ENCODE measurements at regions of chr9 and their contacts with region 1.

Region 1: DNA sequence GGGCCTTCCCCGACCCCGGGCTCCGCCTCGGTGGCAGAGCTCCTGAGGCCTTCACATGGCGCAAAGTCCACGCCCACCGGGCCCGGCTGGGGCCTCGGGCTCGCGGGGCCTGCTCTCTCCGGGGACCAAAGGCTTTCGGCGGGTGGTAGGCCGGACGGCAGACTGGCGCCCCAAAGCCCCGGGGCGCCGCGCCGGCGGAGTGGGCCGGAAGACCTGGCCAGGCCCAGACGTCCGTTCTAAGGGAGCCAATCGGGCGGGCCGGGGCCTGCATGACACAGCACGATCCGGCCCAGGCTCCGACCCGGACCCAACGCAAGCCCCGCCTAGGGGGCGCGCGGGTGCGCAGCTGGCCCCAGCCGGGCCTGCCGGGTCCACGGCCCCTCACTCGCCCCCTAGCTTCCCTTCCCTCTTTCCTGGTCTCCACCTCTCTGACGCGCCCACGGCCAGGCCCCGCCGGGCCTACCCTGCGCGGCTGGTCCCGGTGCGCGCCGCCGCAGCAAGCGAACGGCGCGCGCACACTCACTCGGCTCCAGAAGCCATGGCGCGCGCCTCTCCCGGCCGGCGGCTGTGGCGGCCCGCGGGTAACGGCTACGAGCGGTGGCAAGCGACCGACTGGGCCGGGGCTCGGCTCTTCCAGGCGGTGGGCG is 488 bp downstream of the VCP start:
- DNase-seq: peak; percentile 76 to 87 (median 81)
- H3K4me3 ChIP-seq: peak overlapping the region; percentile 99
- H3K27ac ChIP-seq: peak overlapping the region; percentile 84 to 99
- H3K4me1 ChIP-seq: peaks cover 13% of the 10 kb centered on the region
- H3K27me3 ChIP-seq: no peaks in the 10 kb centered on the region
- CTCF ChIP-seq: peak; percentile 11 to 64 (median 47)
- EP300 ChIP-seq: no peak
- POLR2A ChIP-seq: no peak

Region 2: DNA sequence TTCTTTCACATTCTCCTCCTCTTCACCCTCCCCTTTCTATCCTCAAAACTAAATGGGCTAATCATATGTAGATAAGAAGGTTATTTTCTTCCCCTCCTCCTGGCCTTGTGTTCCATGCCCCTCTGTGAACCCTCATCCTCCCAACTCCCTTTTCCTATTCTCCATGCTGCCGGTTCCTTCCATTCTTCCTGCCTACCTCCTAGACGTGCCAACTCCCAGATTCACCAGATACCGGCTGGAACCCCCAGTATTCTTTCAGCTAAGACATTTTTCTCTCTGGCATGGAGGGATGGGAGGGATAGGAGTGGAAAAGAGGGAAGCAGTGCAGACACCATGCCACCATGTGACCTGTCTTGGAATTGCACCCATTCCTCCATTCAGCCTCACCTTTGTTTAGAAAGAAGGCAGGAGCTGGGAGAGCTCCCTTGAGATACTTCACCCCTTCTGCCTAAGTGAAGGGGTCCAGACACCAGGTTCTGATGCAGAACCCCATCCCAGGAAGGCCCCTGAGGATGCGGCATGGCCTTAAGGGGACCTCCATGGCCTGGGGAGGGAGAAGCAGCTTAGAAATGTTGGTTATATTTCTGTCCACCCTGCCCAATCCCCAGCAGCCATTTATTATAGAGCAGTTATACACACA is 77.6 kb before region 1 on chr9:
- intact Hi-C with region 1: loop called in 2 of 4 experiments (anchors 5 to 10 kb)
- DNase-seq: no peak
- H3K4me3 ChIP-seq: no peak overlapping the region
- H3K27ac ChIP-seq: peak overlapping the region; percentile 66 to 78
- H3K4me1 ChIP-seq: peaks cover 16% of the 10 kb centered on the region
- H3K27me3 ChIP-seq: no peaks in the 10 kb centered on the region
- CTCF ChIP-seq: peak in 2 of 3 donors; percentile 22 to 30
- EP300 ChIP-seq: no peak
- POLR2A ChIP-seq: no peak

Region 3: GRCh38 chr9:35111001-35111933 is 39.3 kb after region 1 on chr9:
- intact Hi-C with region 1: loop called in 1 of 4 experiments (anchors 5 kb)
- DNase-seq: peak; percentile 97 to 98 (median 98)
- H3K4me3 ChIP-seq: peak overlapping the region; percentile 80
- H3K27ac ChIP-seq: peak overlapping the region; percentile 71 to 77
- H3K4me1 ChIP-seq: peaks cover 19% of the 10 kb centered on the region
- H3K27me3 ChIP-seq: no peaks in the 10 kb centered on the region
- CTCF ChIP-seq: peak in 1 of 3 donors; percentile 8
- EP300 ChIP-seq: no peak
- POLR2A ChIP-seq: peak; percentile 44

Region 4: DNA sequence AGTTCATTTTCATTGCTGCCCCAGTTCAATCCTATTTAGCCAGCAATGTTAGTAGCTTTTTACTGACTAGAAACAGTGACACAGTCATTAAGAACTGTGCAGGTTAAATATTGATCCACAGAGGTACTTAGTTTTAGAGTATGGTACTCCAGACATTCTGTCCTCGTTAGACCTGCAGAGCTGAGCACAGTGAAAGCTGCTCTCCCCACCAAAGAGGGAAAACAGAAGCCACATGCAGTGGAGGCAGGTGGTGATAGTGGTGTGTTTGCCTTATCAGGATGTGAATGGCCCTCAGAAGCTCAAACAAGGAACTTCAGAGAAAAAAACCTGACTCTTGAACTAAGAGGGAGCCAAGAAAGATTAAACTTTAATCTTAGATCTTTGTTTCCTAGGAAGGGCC is 165.4 kb after region 1 on chr9:
- intact Hi-C with region 1: no loop called
- DNase-seq: no peak
- H3K4me3 ChIP-seq: no peak overlapping the region
- H3K27ac ChIP-seq: no peak overlapping the region
- H3K4me1 ChIP-seq: no peaks in the 10 kb centered on the region
- H3K27me3 ChIP-seq: no peaks in the 10 kb centered on the region
- CTCF ChIP-seq: no peak
- EP300 ChIP-seq: no peak
- POLR2A ChIP-seq: no peak